HepG2 (cell line): ENCODE measurements at regions of chr11 and their contacts with region 1.

Region 1: GRCh38 chr11:47642099-47642855 is at the start of gene MTCH2:
- DNase-seq: peak; percentile 95
- ATAC-seq: peak; percentile 90
- H3K4me3 ChIP-seq: peak within 1 kb of the TSS; percentile 87 to 94 (median 93)
- H3K27ac ChIP-seq: peak within 1 kb of the TSS; percentile 98
- H3K4me1 ChIP-seq: peaks cover 33% of the 10 kb centered on the region
- H3K27me3 ChIP-seq: no peaks in the 10 kb centered on the region; a peak in 1 of 5 replicates
- CTCF ChIP-seq: peak; percentile 71
- EP300 ChIP-seq: peak in 1 of 2 experiments; percentile 12; a peak in 2 of 4 replicates
- POLR2A ChIP-seq: peak; percentile 94 to 98
- RAD21 ChIP-seq: peak; percentile 55
- total RNA-seq, gene MTCH2: 272 and 373 TPM in 2 replicates

Region 2: DNA sequence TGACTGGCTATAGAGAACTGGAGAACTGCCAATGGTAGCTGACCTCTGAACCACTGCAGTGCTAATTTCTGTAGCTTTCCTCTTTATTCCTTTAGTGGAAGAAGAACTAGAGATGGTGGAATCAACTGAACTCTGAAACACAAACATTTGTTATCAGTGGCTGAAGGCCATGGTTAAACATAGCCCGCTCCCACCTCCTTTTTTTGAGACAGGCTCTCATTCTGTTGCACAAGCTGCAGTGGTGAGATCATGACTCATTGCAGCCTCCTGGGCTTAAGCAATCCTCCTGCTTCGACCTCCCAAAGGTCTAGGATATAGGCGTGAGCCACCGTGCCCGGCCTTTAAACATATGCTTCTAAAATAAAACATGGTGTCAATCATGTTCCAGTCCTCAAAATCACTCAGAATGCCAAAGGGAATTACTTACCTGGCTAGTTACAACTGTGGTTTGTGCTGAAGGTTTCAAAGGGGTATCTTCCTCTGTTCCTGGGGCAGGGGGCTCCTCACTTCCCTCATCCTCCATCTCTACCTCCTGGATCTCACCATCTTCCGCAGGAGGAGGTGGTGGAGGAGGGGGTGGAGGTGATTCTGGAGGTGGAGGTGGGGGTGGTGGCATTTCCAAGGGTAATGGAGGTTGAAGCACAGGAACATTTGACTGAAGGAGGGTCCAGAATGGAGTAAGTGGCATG is 81.9 kb after region 1 on chr11:
- CTCF ChIA-PET with region 1: no interaction called
- POLR2A ChIA-PET with region 1: interaction called, 6 read pairs
- in situ Hi-C with region 1: loop called (anchors 10 kb)
- intact Hi-C with region 1: loop called (anchors 1 kb)
- DNase-seq: peak; percentile 98
- ATAC-seq: peak; percentile 96
- H3K4me3 ChIP-seq: peak overlapping the region in 1 of 3 experiments; percentile 5; a peak in 1 of 6 replicates
- H3K27ac ChIP-seq: peak overlapping the region; percentile 67
- H3K4me1 ChIP-seq: peaks cover 67% of the 10 kb centered on the region
- H3K27me3 ChIP-seq: no peaks in the 10 kb centered on the region
- CTCF ChIP-seq: no peak
- EP300 ChIP-seq: peak; percentile 54 to 95; a peak in 2 of 4 replicates
- POLR2A ChIP-seq: 0 out of 4 replicates have a peak, but pooled peaks of 1 of the 2 experiments have one; percentile 10
- RAD21 ChIP-seq: no peak